ENCODE measurements at regions of chr1 and their contacts with region 1.

Region 1: GRCh38 chr1:85128341-85128740 is 72.5 kb downstream of the SYDE2 start:
- DNase-seq: peak; percentile 67
- ATAC-seq: peak; percentile 93
- H3K4me3 ChIP-seq: peak overlapping the region; percentile 18; the same call in 1 of the 2 replicates
- H3K27ac ChIP-seq: peak overlapping the region; percentile 45; the same call in 1 of the 2 replicates
- H3K4me1 ChIP-seq: peaks cover 4% of the 10 kb centered on the region
- H3K27me3 ChIP-seq: no peaks in the 10 kb centered on the region
- CTCF ChIP-seq: no peak
- POLR2A ChIP-seq: no peak
- RAD21 ChIP-seq: no peak

Region 2: GRCh38 chr1:84311296-84311695 is 817.0 kb before region 1 on chr1:
- CTCF ChIA-PET with region 1: no interaction called
- POLR2A ChIA-PET with region 1: no interaction called
- dilution Hi-C with region 1: no loop called
- in situ Hi-C with region 1: no loop called
- intact Hi-C with region 1: no loop called
- DNase-seq: no peak
- ATAC-seq: no peak
- H3K4me3 ChIP-seq: no peak overlapping the region
- H3K27ac ChIP-seq: no peak overlapping the region
- H3K4me1 ChIP-seq: 0 out of 2 replicates have a peak, but pooled peaks cover 2% of the 10 kb centered on the region
- H3K27me3 ChIP-seq: no peaks in the 10 kb centered on the region
- CTCF ChIP-seq: no peak
- POLR2A ChIP-seq: no peak
- RAD21 ChIP-seq: no peak

Region 3: GRCh38 chr1:84907095-84907827 is 221.1 kb before region 1 on chr1:
- CTCF ChIA-PET with region 1: no interaction called
- POLR2A ChIA-PET with region 1: no interaction called
- dilution Hi-C with region 1: no loop called
- in situ Hi-C with region 1: no loop called
- intact Hi-C with region 1: no loop called
- DNase-seq: peak; percentile 71
- ATAC-seq: peak; percentile 35
- H3K4me3 ChIP-seq: no peak overlapping the region
- H3K27ac ChIP-seq: no peak overlapping the region
- H3K4me1 ChIP-seq: 0 out of 2 replicates have a peak, but pooled peaks cover 2% of the 10 kb centered on the region
- H3K27me3 ChIP-seq: peaks cover 3% of the 10 kb centered on the region; the same call in 1 of the 2 replicates
- CTCF ChIP-seq: no peak
- POLR2A ChIP-seq: no peak
- RAD21 ChIP-seq: no peak

Region 4: DNA sequence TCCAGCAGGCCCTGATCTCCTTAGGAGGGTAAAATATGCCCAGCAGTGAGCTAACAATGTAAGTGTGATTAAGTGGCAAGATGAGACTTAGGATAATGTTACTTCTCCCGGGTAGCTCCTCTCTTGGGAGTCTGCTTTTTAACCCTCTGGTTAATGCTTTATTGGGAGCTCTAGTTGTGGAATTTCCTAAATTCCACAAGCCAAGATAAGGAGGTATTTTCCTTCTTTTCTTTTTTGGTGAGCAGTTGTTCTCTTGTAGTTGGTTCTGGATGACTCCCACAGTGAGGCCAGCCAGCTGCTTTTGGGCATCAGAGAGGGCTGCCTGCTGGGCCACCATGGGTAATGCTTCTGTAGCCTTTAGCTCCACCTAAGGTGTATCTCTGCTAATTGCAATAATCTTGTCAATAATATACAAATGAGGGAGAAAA is 111.8 kb after region 1 on chr1:
- CTCF ChIA-PET with region 1: no interaction called
- POLR2A ChIA-PET with region 1: no interaction called
- dilution Hi-C with region 1: no loop called
- in situ Hi-C with region 1: loop called (anchors 5 kb)
- intact Hi-C with region 1: no loop called
- DNase-seq: peak; percentile 18
- ATAC-seq: peak; percentile 68
- H3K4me3 ChIP-seq: no peak overlapping the region
- H3K27ac ChIP-seq: peak overlapping the region; percentile 37; the same call in 1 of the 2 replicates
- H3K4me1 ChIP-seq: peaks cover 22% of the 10 kb centered on the region
- H3K27me3 ChIP-seq: peaks cover 2% of the 10 kb centered on the region; the same call in 1 of the 2 replicates
- CTCF ChIP-seq: peak; percentile 25
- POLR2A ChIP-seq: no peak
- RAD21 ChIP-seq: peak; percentile 28

Region 5: GRCh38 chr1:85417017-85417416 is 288.7 kb after region 1 on chr1:
- CTCF ChIA-PET with region 1: no interaction called
- POLR2A ChIA-PET with region 1: no interaction called
- dilution Hi-C with region 1: no loop called
- in situ Hi-C with region 1: no loop called
- intact Hi-C with region 1: no loop called
- DNase-seq: no peak
- ATAC-seq: no peak
- H3K4me3 ChIP-seq: no peak overlapping the region
- H3K27ac ChIP-seq: no peak overlapping the region; the same call in 1 of the 2 replicates
- H3K4me1 ChIP-seq: peaks cover 4% of the 10 kb centered on the region; the same call in 1 of the 2 replicates
- H3K27me3 ChIP-seq: no peaks in the 10 kb centered on the region
- CTCF ChIP-seq: no peak
- POLR2A ChIP-seq: no peak
- RAD21 ChIP-seq: no peak

Region 6: GRCh38 chr1:85550784-85551516 is 422.6 kb after region 1 on chr1:
- CTCF ChIA-PET with region 1: no interaction called
- POLR2A ChIA-PET with region 1: no interaction called
- dilution Hi-C with region 1: no loop called
- in situ Hi-C with region 1: no loop called
- intact Hi-C with region 1: no loop called
- DNase-seq: peak; percentile 86
- ATAC-seq: peak; percentile 58
- H3K4me3 ChIP-seq: no peak overlapping the region; the same call in 1 of the 2 replicates
- H3K27ac ChIP-seq: peak overlapping the region; percentile 37; the same call in 1 of the 2 replicates
- H3K4me1 ChIP-seq: peaks cover 29% of the 10 kb centered on the region
- H3K27me3 ChIP-seq: no peaks in the 10 kb centered on the region
- CTCF ChIP-seq: no peak
- POLR2A ChIP-seq: no peak
- RAD21 ChIP-seq: no peak